ENCODE measurements at regions of chr3 and their contacts with region 1.

Region 1: GRCh38 chr3:176872771-176873209 is 324.5 kb downstream of the TBL1XR1 start:
- DNase-seq: no peak
- H3K4me3 ChIP-seq: no peak overlapping the region
- H3K27me3 ChIP-seq: no peaks in the 10 kb centered on the region
- CTCF ChIP-seq: peak; percentile 83

Region 2: GRCh38 chr3:176861137-176861536 is 11.7 kb before region 1 on chr3:
- CTCF ChIA-PET with region 1: interaction called, 16 read pairs
- POLR2A ChIA-PET with region 1: no interaction called
- DNase-seq: no peak
- H3K4me3 ChIP-seq: no peak overlapping the region
- H3K27me3 ChIP-seq: no peaks in the 10 kb centered on the region
- CTCF ChIP-seq: no peak

Region 3: GRCh38 chr3:176939022-176939817 is 66.4 kb after region 1 on chr3:
- CTCF ChIA-PET with region 1: interaction called, 27 read pairs
- POLR2A ChIA-PET with region 1: no interaction called
- DNase-seq: no peak
- H3K4me3 ChIP-seq: no peak overlapping the region
- H3K27me3 ChIP-seq: no peaks in the 10 kb centered on the region; the same call in 1 of the 2 replicates
- CTCF ChIP-seq: peak; percentile 80

Region 4: GRCh38 chr3:178385280-178385952 is 1512.6 kb after region 1 on chr3:
- CTCF ChIA-PET with region 1: interaction called, 24 read pairs
- POLR2A ChIA-PET with region 1: no interaction called
- DNase-seq: no peak
- H3K4me3 ChIP-seq: no peak overlapping the region
- H3K27me3 ChIP-seq: no peaks in the 10 kb centered on the region
- CTCF ChIP-seq: peak; percentile 73